CD4-positive, alpha-beta memory T cell (primary cell): ENCODE measurements at regions of chrX and their contacts with region 1.

Region 1: DNA sequence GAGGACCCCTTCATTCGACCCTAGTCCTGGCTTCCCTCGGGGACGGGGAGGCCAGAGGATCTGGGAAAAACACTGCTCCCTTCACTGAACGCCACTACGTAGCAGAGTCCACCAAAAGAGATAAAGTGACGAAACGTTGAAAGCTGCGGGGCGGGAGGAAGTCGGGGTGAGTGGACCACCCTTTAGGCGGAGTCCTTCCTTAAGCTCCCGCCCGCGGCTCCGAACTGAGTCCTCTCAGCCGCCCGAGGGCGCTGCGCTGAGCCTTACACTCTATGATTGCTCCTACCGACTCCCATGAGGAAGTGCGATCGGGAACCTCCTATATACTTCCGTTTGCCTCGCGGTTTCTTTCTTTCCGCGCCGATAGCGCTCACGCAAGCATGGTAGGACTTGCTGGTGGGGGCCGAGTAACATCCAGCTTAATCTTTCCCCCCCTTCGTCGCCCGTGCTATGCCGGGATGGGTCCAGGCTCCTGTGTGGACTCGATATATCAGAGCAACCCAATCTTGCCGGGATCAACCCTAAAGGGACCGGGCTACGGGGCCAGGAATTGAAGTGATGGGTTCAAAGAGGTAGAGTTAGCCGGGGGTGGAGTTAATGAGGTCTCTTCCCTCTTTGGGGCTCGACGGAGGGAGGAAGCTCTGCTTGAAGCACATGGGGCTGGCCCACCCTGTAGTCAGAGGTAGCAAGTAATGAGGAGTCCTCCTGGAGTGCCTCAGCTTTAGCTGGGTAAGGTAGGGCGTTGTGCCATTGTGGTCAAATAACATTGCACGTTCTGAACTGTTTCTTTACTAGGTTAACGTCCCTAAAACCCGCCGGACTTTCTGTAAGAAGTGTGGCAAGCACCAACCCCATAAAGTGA is at the start of gene RPL36A:
- DNase-seq: peak; percentile 72 to 84 (median 76)
- H3K4me3 ChIP-seq: peak within 1 kb of the TSS; percentile 47 to 82
- H3K4me3 Mint-ChIP-seq: peak within 1 kb of the TSS; percentile 88 to 98 (median 93)
- H3K27ac ChIP-seq: peak within 1 kb of the TSS; percentile 68
- H3K27ac Mint-ChIP-seq: peak within 1 kb of the TSS; percentile 89 to 98 (median 96)
- H3K4me1 ChIP-seq: peaks cover 15% of the 10 kb centered on the region
- H3K4me1 Mint-ChIP-seq: peaks cover 10 to 39% (median 15%) of the 10 kb centered on the region in 4 donors
- H3K27me3 ChIP-seq: no peaks in the 10 kb centered on the region
- H3K27me3 Mint-ChIP-seq: no peaks in the 10 kb centered on the region
- total RNA-seq, gene RPL36A: 380 to 428 TPM

Region 2: DNA sequence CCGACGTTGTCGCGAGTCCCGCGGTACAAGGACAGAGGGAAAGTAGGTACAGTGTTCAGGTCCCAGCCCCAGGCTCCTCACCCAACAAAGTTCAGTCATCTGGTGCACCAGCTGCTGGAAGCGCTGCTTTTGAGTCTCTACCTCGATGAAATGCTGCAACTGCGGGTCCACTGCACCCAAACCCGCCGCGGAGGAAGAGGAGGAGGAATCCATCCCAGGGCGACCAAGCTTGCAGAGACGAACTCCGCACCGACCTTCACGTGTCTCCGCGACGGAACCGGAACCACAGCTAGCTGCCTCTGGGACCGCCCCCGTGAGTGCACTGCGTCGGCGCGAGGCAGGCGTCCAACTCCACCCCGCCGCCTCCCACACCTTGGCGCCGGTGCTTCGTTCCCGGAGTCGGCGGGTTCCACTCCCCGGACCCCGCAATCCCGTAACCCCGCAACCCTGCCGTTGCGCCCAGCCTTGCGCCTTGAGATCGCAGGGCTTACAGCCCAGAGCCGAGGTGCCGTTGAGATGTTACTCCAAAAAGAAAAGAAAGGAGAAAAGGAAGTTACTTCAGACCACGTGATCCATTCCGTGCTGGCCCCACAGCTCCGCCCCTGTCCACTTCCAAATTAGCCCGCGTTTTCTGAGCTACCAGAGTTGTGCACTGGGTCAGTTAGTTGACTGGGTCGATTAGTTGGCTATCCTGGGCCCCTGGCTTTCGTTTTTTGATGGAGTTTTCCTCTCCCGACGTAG is 42.3 kb before region 1 on chrX and contains the start of gene TIMM8A:
- CTCF ChIA-PET with region 1: interaction called, 12 read pairs
- POLR2A ChIA-PET with region 1: interaction called, 36 read pairs
- intact Hi-C with region 1: loop called (anchors 2 kb)
- DNase-seq: peak; percentile 73 to 78 (median 74)
- H3K4me3 ChIP-seq: peak within 1 kb of the TSS; percentile 69 to 74
- H3K4me3 Mint-ChIP-seq: peak within 1 kb of the TSS; percentile 88 to 94 (median 91)
- H3K27ac ChIP-seq: peak within 1 kb of the TSS; percentile 72
- H3K27ac Mint-ChIP-seq: peak within 1 kb of the TSS; percentile 85 to 97 (median 92)
- H3K4me1 ChIP-seq: peaks cover 19% of the 10 kb centered on the region
- H3K4me1 Mint-ChIP-seq: peaks cover 5 to 21% (median 11%) of the 10 kb centered on the region in 4 donors
- H3K27me3 ChIP-seq: no peaks in the 10 kb centered on the region
- H3K27me3 Mint-ChIP-seq: no peaks in the 10 kb centered on the region
- total RNA-seq, gene TIMM8A: 12.0 to 13.3 TPM